ENCODE measurements at regions of chr20 and their contacts with region 1.

Region 1: GRCh38 chr20:5996765-5997164 is 46.3 kb downstream of the MCM8 start:
- DNase-seq: no peak
- ATAC-seq: peak in 1 of 4 donors; percentile 34
- H3K4me3 ChIP-seq: no peak overlapping the region
- H3K27ac ChIP-seq: no peak overlapping the region
- H3K4me1 ChIP-seq: no peaks in the 10 kb centered on the region
- H3K27me3 ChIP-seq: no peaks in the 10 kb centered on the region
- CTCF ChIP-seq: no peak
- POLR2A ChIP-seq: no peak

Region 2: DNA sequence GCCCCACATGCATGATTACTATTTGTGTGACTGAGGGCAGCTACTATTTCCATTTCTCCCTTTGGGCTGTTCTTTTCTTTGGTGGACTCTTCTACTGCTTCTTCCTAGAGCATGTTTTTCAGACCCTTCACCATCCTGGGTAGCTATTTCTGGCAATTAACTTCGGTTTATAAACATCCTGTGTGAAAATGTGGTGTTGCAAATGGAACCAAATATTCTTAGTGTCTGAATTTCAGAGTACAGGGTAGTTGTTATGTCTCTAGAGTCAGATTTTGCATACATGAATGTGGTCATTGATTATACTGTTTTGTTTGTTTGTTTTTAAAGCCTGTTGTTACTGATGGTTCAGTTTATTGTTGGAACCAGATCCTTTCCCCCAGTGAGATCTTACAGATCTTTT is 729.7 kb before region 1 on chr20:
- intact Hi-C with region 1: no loop called
- DNase-seq: no peak
- ATAC-seq: no peak
- H3K4me3 ChIP-seq: no peak overlapping the region
- H3K27ac ChIP-seq: no peak overlapping the region
- H3K4me1 ChIP-seq: no peaks in the 10 kb centered on the region
- H3K27me3 ChIP-seq: no peaks in the 10 kb centered on the region
- CTCF ChIP-seq: no peak
- POLR2A ChIP-seq: no peak

Region 3: GRCh38 chr20:5529331-5530148 is 467.2 kb before region 1 on chr20:
- intact Hi-C with region 1: loop called in 1 of 10 experiments (anchors 5 kb)
- DNase-seq: peak; percentile 73 to 91 (median 79)
- ATAC-seq: peak; percentile 73 to 92 (median 88)
- H3K4me3 ChIP-seq: peak overlapping the region in 3 of 12 donors; percentile 1 to 25 (median 23)
- H3K27ac ChIP-seq: no peak overlapping the region
- H3K4me1 ChIP-seq: peaks cover 0 to 22% (median 6%) of the 10 kb centered on the region in 12 donors
- H3K27me3 ChIP-seq: no peaks in the 10 kb centered on the region
- CTCF ChIP-seq: peak; percentile 56 to 90 (median 74)
- POLR2A ChIP-seq: no peak

Region 4: DNA sequence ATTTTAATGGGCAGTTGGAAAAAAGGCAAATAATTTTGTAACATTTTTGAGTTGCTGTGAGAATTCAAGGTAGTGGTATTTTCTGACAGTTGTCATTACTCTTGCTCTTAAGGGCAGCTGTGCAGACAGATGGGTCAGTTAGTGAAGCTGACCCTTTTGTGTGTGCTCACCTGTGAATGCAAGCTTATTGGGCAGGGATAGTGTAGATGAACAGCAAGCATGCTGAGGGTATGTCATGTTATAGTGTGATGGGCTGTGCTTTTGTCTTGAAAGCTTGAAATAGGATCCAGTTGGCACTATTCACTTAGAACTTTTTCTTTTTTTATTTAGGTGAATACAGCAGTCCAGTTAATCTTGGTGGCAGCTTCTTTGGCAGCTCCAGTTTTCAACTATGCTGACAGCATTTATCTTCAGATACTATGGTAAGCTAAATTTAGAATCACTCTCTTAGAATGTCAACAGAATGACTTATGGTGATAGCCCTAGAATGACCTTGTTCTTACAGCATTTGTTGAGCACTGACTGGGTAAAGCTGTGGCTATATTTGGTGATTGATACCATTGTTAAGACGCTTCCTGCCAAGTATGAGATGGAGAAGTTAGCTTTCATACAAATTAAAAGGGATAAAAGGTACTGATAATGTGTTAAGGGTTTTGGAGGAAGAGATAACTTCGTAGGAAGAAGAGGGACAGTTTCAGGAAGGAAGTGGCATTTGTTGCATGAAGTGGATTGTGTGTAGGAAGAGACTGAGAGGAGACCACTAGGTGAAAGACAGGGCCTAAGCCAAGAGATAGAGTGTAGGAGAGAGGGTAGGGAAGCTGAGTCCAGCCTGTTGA is 37.6 kb after region 1 on chr20:
- intact Hi-C with region 1: no loop called
- DNase-seq: peak in 1 of 5 donors; percentile 18
- ATAC-seq: peak; percentile 87 to 91 (median 89)
- H3K4me3 ChIP-seq: no peak overlapping the region
- H3K27ac ChIP-seq: peak overlapping the region; percentile 39 to 90 (median 74)
- H3K4me1 ChIP-seq: peaks cover 0 to 75% (median 17%) of the 10 kb centered on the region in 12 donors
- H3K27me3 ChIP-seq: no peaks in the 10 kb centered on the region
- CTCF ChIP-seq: no peak
- POLR2A ChIP-seq: no peak